Calu3 (cell line): ENCODE measurements at regions of chr2 and their contacts with region 1.

Region 1: GRCh38 chr2:237474931-237475703 is 11.9 kb upstream of the MLPH start:
- DNase-seq: peak; percentile 86
- H3K4me3 Mint-ChIP-seq: peak overlapping the region; percentile 86
- H3K27ac Mint-ChIP-seq: peak overlapping the region; percentile 90
- H3K4me1 Mint-ChIP-seq: peaks cover 14% of the 10 kb centered on the region
- H3K27me3 Mint-ChIP-seq: peaks cover 45% of the 10 kb centered on the region
- CTCF ChIP-seq: peak; percentile 89

Region 2: DNA sequence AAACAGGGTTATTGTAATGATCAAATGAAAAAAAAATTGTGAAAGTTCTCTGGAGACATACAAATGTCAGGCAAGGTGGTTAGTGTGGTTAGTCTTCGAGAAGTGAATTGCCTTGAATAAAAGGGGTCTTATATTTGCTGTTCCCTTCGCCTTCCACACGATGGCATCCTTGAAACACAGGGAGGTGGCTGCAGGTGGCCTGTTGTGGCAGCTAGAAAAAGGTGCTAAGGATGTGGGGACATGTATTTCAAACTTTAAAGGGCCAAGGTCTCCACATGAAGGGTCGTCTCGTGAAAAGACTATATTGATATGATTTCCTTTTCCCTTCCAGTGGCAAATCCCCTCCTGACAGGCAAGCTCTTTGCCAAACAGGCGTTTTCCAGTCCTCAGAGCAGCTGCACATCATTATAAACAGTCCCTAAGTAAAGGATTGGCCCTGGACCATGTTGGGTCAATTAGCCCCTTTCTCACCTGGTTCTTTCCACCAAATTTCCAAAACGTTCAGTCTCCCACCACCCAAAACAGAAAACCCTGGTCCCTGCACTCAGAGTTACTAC is 321.0 kb before region 1 on chr2:
- CTCF ChIA-PET with region 1: no interaction called
- intact Hi-C with region 1: loop called (anchors 5 kb)
- DNase-seq: peak; percentile 73
- H3K4me3 Mint-ChIP-seq: no peak overlapping the region
- H3K27ac Mint-ChIP-seq: no peak overlapping the region
- H3K4me1 Mint-ChIP-seq: no peaks in the 10 kb centered on the region
- H3K27me3 Mint-ChIP-seq: peaks cover 15% of the 10 kb centered on the region
- CTCF ChIP-seq: peak; percentile 83

Region 3: DNA sequence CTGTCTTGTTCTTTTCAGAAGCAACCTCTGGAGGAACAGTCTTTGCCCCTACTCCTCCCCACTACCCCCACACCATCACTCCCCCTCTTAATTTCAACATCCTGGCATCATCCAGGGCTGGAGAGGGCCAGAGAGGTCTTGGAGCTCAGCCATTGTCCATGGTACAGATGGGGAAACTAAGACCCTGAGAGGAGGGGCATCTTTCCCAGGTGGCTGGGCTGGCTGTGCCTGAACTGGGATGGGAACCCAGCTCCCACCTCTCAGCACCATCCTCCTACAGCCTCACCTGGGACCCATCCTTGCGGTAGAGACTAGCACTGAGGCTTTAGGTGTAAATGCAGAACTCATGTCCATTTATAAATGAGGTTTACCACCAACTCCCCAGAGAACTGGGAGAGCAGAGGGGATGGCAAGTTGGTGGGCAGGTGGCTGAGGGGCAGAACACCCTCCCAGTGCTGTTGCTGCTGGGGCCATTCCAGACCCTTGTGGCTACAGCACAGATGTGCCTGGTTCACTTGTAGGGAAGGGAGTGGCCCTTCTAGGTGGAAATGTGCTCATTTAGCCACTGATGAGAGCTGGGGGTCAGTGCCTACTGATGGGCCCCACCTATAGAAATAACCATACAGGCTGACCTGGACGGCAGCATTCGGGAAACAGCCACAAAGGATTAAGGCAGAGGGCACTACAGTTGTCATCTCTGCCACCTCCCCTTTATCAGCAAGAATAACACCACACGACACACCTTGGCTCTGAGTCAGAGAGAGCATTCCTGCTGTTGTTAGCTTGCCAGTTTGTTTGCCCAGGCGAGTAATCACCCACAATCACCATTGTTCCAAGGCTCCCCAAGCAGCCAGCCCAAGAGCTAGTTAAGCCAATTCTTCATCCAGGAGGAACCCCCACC is 14.0 kb after region 1 on chr2:
- CTCF ChIA-PET with region 1: interaction called, 10 read pairs
- intact Hi-C with region 1: no loop called
- DNase-seq: peak; percentile 82
- H3K4me3 Mint-ChIP-seq: peak overlapping the region; percentile 90
- H3K27ac Mint-ChIP-seq: peak overlapping the region; percentile 99
- H3K4me1 Mint-ChIP-seq: peaks cover 44% of the 10 kb centered on the region
- H3K27me3 Mint-ChIP-seq: no peaks in the 10 kb centered on the region
- CTCF ChIP-seq: no peak

Region 4: GRCh38 chr2:237512774-237513466 is 37.8 kb after region 1 on chr2:
- CTCF ChIA-PET with region 1: interaction called, 22 read pairs
- intact Hi-C with region 1: loop called (anchors 5 kb)
- DNase-seq: peak; percentile 89
- H3K4me3 Mint-ChIP-seq: no peak overlapping the region
- H3K27ac Mint-ChIP-seq: no peak overlapping the region
- H3K4me1 Mint-ChIP-seq: peaks cover 20% of the 10 kb centered on the region
- H3K27me3 Mint-ChIP-seq: no peaks in the 10 kb centered on the region
- CTCF ChIP-seq: peak; percentile 95